Thyroid gland (tissue), 4 donors: ENCODE measurements at regions of chr5 and their contacts with region 1.

Region 1: DNA sequence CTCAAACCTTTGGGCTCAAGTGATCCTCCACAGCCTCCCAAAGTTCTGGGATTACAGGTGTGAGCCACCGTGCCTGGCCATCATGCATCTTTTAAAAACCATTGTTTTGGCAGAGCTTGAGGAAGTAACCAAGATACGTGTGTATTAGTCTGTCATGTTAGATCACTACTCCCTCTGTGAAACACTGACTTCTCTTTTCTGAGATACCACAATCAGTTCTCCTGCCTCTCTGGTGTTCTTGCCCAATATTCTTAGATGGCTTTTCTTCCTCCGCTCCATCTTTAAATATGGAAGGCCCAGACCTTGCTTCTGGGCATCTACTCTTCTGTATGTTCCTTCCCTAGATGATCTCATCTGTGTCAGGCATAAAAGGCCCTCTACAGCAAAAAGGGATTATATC is 14.2 kb upstream of the CCNB1 start:
- DNase-seq: no peak
- H3K4me3 ChIP-seq: no peak overlapping the region
- H3K27ac ChIP-seq: no peak overlapping the region
- H3K4me1 ChIP-seq: no peaks in the 10 kb centered on the region
- H3K27me3 ChIP-seq: no peaks in the 10 kb centered on the region
- CTCF ChIP-seq: no peak
- POLR2A ChIP-seq: no peak

Region 2: DNA sequence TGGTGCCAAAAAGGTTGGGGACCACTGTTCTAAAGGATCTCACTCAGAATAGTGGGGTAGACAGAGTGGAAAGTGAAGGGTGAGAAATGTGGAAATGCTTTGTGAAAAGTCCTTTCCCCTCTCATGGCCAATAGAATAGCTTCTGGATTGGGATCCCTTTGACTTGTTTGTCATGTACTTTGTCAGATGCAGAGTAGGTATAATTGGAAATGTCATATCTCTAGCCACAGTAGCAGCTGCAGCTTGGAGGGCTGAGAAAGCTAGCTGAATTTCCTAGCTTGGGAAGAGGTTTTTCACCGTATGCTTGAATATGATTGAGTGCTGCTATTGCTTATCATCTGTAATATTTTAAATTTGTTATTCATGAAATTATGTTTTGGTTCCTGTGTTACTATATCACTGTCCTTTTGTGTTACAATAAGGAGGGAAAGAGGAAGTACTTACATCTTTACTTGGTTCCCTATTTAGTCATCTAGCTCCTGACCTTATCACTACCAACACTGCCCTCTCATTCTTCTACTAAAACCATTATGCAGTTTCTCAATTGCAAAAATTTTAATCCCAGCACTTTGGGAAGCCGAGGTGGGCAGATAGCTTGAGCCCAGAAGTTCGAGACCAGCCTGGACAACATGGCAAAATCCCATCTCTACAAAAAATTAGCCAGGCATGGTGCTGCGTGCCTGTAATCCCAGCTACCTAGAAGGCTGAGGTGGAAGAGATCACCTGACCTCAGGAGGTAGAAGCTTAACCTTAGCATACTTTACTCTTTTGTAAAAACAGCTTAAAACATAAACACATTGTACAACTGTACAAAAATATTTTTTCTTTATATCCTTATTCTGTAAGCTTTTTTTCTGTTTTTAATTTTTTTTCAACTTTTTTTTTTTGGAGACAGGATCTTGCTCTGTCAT is 46.5 kb before region 1 on chr5:
- intact Hi-C with region 1: loop called (anchors 10 kb)
- DNase-seq: no peak
- H3K4me3 ChIP-seq: no peak overlapping the region
- H3K27ac ChIP-seq: no peak overlapping the region
- H3K4me1 ChIP-seq: no peaks in the 10 kb centered on the region
- H3K27me3 ChIP-seq: no peaks in the 10 kb centered on the region
- CTCF ChIP-seq: no peak
- POLR2A ChIP-seq: no peak